AG04450 (cell line): ENCODE measurements at regions of chr1 and their contacts with region 1.

Region 1: DNA sequence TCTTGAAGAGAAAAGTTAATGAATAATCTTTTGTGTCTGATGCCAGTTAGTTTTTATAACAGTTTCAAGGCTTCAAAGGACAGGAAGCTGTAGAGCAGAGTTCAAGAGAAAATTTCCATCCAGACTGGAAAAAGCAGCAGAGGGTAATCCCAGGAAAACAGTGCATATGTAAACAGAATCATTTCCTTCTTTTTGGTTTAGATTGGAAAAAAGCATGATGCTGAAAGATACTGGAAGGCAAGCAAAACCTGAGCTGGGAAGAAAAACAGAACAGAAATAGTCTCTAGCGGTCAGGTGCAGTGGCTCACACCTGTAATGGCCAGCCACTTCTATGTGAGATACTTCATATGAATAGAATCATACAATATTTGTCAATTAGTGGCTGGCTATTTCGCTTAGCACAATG is 71.9 kb downstream of the ZSWIM5 start:
- DNase-seq: no peak
- H3K4me3 ChIP-seq: no peak overlapping the region
- H3K27ac ChIP-seq: no peak overlapping the region
- H3K27me3 ChIP-seq: no peaks in the 10 kb centered on the region
- CTCF ChIP-seq: no peak

Region 2: DNA sequence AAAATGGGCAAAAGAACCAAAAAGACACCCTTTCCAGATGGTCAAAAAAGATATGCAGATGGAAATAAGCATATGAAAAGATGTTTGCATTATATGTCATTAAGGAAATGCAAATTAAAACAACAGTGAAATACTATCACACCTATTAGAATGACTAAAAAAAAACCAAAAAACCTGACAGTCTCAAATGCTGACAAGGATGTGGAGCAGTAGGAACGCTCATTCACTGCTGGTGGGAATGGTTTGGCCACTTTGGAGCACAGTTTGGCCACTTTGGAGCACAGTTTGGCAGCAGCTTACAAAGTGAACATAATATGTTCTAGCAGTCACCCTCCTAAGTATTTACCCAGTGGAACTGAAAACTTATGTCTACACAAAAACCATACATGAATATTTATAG is 1305.9 kb before region 1 on chr1:
- CTCF ChIA-PET with region 1: interaction called, 10 read pairs
- POLR2A ChIA-PET with region 1: no interaction called
- DNase-seq: no peak
- H3K4me3 ChIP-seq: no peak overlapping the region
- H3K27ac ChIP-seq: no peak overlapping the region
- H3K27me3 ChIP-seq: no peaks in the 10 kb centered on the region
- CTCF ChIP-seq: no peak

Region 3: GRCh38 chr1:45152126-45152525 is 17.7 kb after region 1 on chr1:
- CTCF ChIA-PET with region 1: no interaction called
- POLR2A ChIA-PET with region 1: no interaction called
- DNase-seq: no peak
- H3K4me3 ChIP-seq: no peak overlapping the region
- H3K27ac ChIP-seq: no peak overlapping the region
- H3K27me3 ChIP-seq: no peaks in the 10 kb centered on the region
- CTCF ChIP-seq: no peak